Naive thymus-derived CD4-positive, alpha-beta T cell (primary cell): ENCODE measurements at regions of chr20 and their contacts with region 1.

Region 1: DNA sequence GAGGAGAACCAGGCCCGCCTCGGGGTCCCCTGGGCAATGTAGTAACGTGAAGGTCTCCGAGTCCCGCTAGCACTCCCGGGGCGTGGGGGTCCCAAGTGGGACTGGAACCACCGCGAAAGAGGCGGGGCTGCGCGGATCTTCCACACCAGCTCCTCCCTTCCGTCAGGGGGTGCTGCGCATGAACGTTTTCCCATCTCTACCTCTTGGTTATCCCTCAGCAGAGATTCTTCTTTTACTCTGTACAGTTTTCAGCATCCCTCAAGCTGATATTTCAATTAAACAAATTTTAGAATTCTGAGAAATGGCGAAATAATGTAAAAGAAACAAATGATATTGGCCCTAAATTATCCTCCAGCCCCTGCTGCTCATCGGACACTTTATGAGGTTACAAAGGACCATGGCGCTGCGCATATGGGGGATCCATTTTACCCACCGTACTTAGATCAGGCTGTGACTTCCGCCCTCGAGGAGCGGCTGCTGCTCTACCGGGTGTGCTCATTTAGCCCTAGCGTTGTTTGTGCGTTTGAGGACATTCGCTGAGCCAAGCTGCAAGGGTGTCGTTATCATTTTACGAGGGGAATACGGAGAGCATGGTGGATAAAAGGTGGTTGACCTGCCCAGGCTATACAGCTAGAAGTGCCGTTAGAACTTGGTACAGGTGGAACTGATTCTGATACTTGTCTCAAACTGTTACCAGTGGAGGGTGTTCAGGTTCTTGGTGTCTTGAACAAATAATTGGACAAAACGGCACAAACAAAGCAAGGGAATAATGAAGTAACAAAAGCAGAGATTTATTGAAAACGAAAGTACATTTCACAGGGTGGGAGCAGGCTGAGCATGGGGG is 75.2 kb upstream of the CHD6 start:
- DNase-seq: peak; percentile 59 to 89 (median 83)
- ATAC-seq: peak; percentile 94
- H3K4me3 ChIP-seq: peak overlapping the region; percentile 63
- H3K4me3 Mint-ChIP-seq: peak overlapping the region; percentile 87 to 94 (median 92)
- H3K27ac ChIP-seq: peak overlapping the region; percentile 77
- H3K27ac Mint-ChIP-seq: peak overlapping the region; percentile 91 to 99 (median 96)
- H3K4me1 ChIP-seq: no peaks in the 10 kb centered on the region
- H3K4me1 Mint-ChIP-seq: peaks cover 6 to 24% (median 20%) of the 10 kb centered on the region in 7 donors
- H3K27me3 ChIP-seq: no peaks in the 10 kb centered on the region
- H3K27me3 Mint-ChIP-seq: peaks cover 2 to 6% (median 5%) of the 10 kb centered on the region in 5 donors

Region 2: DNA sequence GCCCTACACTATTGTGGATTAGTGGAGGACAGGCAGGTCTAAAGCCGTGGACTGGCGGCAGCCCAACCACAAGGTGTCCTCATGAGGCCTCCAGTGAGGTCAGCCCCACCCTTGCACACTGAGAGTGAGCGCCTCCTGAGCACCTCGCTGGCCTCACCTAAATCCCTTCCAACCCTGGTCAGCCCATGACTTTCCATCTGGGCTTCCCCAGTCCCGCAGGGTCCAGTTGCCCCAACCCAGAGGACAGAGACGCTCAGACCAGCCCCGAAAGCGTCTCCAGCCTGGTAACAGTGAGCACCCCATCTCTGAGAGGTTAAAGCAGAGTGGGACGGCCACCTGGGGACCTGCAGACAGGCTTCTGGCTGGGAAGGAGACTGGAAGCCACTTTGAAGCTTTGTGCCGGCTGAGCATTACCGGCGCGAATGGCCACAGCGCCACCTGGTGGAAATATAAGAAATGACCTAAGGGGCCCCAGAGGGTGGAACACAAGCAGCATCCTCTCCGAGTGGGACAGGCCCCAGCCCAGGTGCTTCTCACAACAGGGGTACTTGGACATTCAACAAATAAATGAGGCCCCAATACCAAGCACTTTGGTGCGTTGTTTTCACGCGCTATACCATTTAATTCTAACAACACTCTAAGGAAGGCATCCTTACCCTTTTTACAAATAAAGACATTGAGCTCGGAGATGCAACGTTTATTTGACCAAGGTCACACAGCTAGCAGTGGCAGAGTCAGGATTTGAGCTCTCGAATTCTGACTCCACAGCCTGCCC is 730.4 kb before region 1 on chr20:
- CTCF ChIA-PET with region 1: no interaction called
- POLR2A ChIA-PET with region 1: no interaction called
- intact Hi-C with region 1: loop called in 1 of 2 experiments (anchors 10 kb)
- DNase-seq: peak; percentile 36 to 76 (median 64)
- ATAC-seq: peak; percentile 90
- H3K4me3 ChIP-seq: no peak overlapping the region
- H3K4me3 Mint-ChIP-seq: no peak overlapping the region
- H3K27ac ChIP-seq: no peak overlapping the region
- H3K27ac Mint-ChIP-seq: no peak overlapping the region
- H3K4me1 ChIP-seq: peaks cover 0 to 15% of the 10 kb centered on the region in 2 donors
- H3K4me1 Mint-ChIP-seq: peaks cover 0 to 11% (median 9%) of the 10 kb centered on the region in 7 donors
- H3K27me3 ChIP-seq: no peaks in the 10 kb centered on the region
- H3K27me3 Mint-ChIP-seq: peaks cover 0 to 5% (median 0%) of the 10 kb centered on the region in 5 donors

Region 3: GRCh38 chr20:41339507-41340326 is 353.6 kb before region 1 on chr20:
- CTCF ChIA-PET with region 1: no interaction called
- POLR2A ChIA-PET with region 1: no interaction called
- intact Hi-C with region 1: loop called in 1 of 2 experiments (anchors 2 kb)
- DNase-seq: peak; percentile 72 to 92 (median 83)
- ATAC-seq: peak; percentile 97
- H3K4me3 ChIP-seq: peak overlapping the region; percentile 28
- H3K4me3 Mint-ChIP-seq: peak overlapping the region; percentile 72 to 85 (median 82)
- H3K27ac ChIP-seq: no peak overlapping the region
- H3K27ac Mint-ChIP-seq: peak overlapping the region in 5 of 9 donors; percentile 47 to 86 (median 67)
- H3K4me1 ChIP-seq: peaks cover 0 to 3% of the 10 kb centered on the region in 2 donors
- H3K4me1 Mint-ChIP-seq: peaks cover 8 to 15% (median 9%) of the 10 kb centered on the region in 7 donors
- H3K27me3 ChIP-seq: no peaks in the 10 kb centered on the region
- H3K27me3 Mint-ChIP-seq: peaks cover 0 to 12% (median 3%) of the 10 kb centered on the region in 5 donors

Region 4: DNA sequence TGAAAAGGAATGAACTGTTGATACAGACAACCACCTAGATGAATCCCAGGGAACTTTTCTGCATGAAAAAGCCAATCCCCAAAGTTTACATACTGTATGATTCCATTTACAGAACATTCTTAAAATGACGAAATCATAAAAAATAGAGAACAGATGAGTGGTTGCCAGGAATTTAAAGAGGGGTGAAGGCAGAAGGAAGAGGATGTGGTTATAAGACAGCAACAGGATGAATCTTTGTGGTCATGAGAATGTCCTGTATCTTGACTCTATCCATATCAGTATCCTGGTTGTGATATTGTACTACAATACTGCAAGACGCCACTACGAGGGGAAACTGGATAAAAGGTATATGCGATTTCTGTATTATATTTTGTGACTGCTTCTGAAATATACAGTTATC is 256.7 kb before region 1 on chr20:
- CTCF ChIA-PET with region 1: no interaction called
- POLR2A ChIA-PET with region 1: no interaction called
- intact Hi-C with region 1: loop called in 1 of 2 experiments (anchors 5 kb)
- DNase-seq: peak in 6 of 9 donors; percentile 10 to 59 (median 50)
- ATAC-seq: peak; percentile 89
- H3K4me3 ChIP-seq: no peak overlapping the region
- H3K4me3 Mint-ChIP-seq: peak overlapping the region in 9 of 10 donors; percentile 21 to 85 (median 47)
- H3K27ac ChIP-seq: no peak overlapping the region
- H3K27ac Mint-ChIP-seq: peak overlapping the region in 8 of 9 donors; percentile 6 to 92 (median 55)
- H3K4me1 ChIP-seq: peaks cover 0 to 21% of the 10 kb centered on the region in 2 donors
- H3K4me1 Mint-ChIP-seq: peaks cover 35 to 79% (median 67%) of the 10 kb centered on the region in 7 donors
- H3K27me3 ChIP-seq: no peaks in the 10 kb centered on the region
- H3K27me3 Mint-ChIP-seq: no peaks in the 10 kb centered on the region

Region 5: DNA sequence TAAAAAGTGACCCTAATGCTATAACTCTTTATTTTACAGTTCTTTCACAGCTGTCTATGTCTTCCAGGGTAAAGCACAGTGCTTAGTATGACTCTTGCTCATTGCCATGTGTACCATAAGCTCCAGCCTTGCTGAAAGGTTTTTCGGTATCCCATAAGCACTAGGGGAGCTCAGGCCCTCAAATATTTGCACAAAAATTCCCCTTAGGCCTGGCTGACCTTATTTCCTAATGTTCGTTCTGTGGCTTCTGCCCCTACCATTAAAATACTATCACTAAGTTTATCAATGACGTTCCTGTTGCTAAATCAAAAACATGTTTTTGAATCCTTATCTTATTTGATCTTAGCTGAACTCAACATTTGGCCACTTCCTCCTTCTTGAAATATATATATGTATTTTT is 30.9 kb before region 1 on chr20:
- CTCF ChIA-PET with region 1: no interaction called
- POLR2A ChIA-PET with region 1: no interaction called
- intact Hi-C with region 1: no loop called
- DNase-seq: no peak
- ATAC-seq: no peak
- H3K4me3 ChIP-seq: no peak overlapping the region
- H3K4me3 Mint-ChIP-seq: no peak overlapping the region
- H3K27ac ChIP-seq: no peak overlapping the region
- H3K27ac Mint-ChIP-seq: no peak overlapping the region
- H3K4me1 ChIP-seq: no peaks in the 10 kb centered on the region
- H3K4me1 Mint-ChIP-seq: peaks cover 0 to 10% (median 0%) of the 10 kb centered on the region in 7 donors
- H3K27me3 ChIP-seq: no peaks in the 10 kb centered on the region
- H3K27me3 Mint-ChIP-seq: peaks cover 22 to 37% (median 30%) of the 10 kb centered on the region in 5 donors

Region 6: DNA sequence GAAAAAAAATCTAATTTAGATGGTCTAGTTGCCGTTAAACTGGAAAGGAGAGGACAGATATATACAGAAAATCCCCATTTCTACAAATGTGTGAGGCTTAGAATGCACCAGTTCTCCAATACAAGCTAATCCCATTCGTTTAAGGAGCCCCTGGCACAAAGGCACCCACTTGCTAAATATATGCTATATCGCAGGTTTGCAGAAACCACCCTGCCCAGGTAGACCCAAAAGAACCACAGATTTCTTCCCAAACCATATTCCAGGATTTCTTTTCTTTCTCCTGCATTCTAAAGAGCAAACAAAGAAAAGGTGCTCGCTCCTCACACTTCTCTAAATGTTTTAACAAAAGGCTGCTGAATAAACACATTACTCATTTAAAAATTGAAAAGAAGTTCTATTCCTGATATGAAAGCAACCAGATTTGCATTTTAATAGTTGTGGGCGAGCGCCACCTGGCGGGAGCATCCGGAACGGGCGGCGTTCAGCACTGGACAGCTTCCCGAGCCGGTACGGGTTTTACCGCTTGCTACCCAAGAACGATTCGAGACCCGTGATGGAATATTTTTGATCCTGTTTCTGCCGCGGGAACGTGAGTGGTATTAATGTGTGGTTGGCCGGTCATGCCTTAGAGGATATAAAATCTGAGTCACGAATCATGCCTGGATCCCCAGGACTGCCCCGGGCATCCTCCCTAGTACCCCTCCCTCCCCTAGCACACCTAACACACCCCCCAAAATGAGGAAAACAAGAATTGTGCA is 1494.3 kb after region 1 on chr20:
- CTCF ChIA-PET with region 1: no interaction called
- POLR2A ChIA-PET with region 1: no interaction called
- intact Hi-C with region 1: loop called in 1 of 2 experiments (anchors 5 kb)
- DNase-seq: peak in 7 of 9 donors; percentile 15 to 72 (median 29)
- ATAC-seq: no peak
- H3K4me3 ChIP-seq: no peak overlapping the region
- H3K4me3 Mint-ChIP-seq: peak overlapping the region in 2 of 10 donors; percentile 20 to 40
- H3K27ac ChIP-seq: no peak overlapping the region
- H3K27ac Mint-ChIP-seq: no peak overlapping the region
- H3K4me1 ChIP-seq: no peaks in the 10 kb centered on the region
- H3K4me1 Mint-ChIP-seq: peaks cover 0 to 11% (median 7%) of the 10 kb centered on the region in 7 donors
- H3K27me3 ChIP-seq: peaks cover 0 to 4% of the 10 kb centered on the region in 2 donors
- H3K27me3 Mint-ChIP-seq: peaks cover 42 to 61% (median 57%) of the 10 kb centered on the region in 5 donors

Region 7: GRCh38 chr20:43590392-43591323 is 1897.3 kb after region 1 on chr20 and contains the start of gene IFT52:
- CTCF ChIA-PET with region 1: no interaction called
- POLR2A ChIA-PET with region 1: no interaction called
- intact Hi-C with region 1: loop called in 1 of 2 experiments (anchors 5 kb)
- DNase-seq: peak; percentile 76 to 89 (median 87)
- ATAC-seq: peak; percentile 98
- H3K4me3 ChIP-seq: peak within 1 kb of the TSS; percentile 90
- H3K4me3 Mint-ChIP-seq: peak within 1 kb of the TSS; percentile 90 to 97 (median 94)
- H3K27ac ChIP-seq: peak within 1 kb of the TSS; percentile 88
- H3K27ac Mint-ChIP-seq: peak within 1 kb of the TSS; percentile 91 to 98 (median 97)
- H3K4me1 ChIP-seq: peaks cover 5 to 10% of the 10 kb centered on the region in 2 donors
- H3K4me1 Mint-ChIP-seq: peaks cover 17 to 21% (median 21%) of the 10 kb centered on the region in 7 donors
- H3K27me3 ChIP-seq: no peaks in the 10 kb centered on the region
- H3K27me3 Mint-ChIP-seq: peaks cover 0 to 5% (median 0%) of the 10 kb centered on the region in 5 donors
- total RNA-seq, gene IFT52: 14.8 to 19.7 (median 16.9) TPM